ENCODE measurements at regions of chr1 and their contacts with region 1.

Region 1: GRCh38 chr1:26009796-26010460 is 11.6 kb upstream of the EXTL1 start:
- DNase-seq: peak; percentile 46 to 61
- H3K4me3 ChIP-seq: no peak overlapping the region
- H3K4me3 Mint-ChIP-seq: no peak overlapping the region
- H3K27ac Mint-ChIP-seq: no peak overlapping the region
- H3K4me1 ChIP-seq: no peaks in the 10 kb centered on the region
- H3K4me1 Mint-ChIP-seq: no peaks in the 10 kb centered on the region
- H3K27me3 ChIP-seq: no peaks in the 10 kb centered on the region
- H3K27me3 Mint-ChIP-seq: no peaks in the 10 kb centered on the region
- CTCF ChIP-seq: peak; percentile 47 to 48

Region 2: DNA sequence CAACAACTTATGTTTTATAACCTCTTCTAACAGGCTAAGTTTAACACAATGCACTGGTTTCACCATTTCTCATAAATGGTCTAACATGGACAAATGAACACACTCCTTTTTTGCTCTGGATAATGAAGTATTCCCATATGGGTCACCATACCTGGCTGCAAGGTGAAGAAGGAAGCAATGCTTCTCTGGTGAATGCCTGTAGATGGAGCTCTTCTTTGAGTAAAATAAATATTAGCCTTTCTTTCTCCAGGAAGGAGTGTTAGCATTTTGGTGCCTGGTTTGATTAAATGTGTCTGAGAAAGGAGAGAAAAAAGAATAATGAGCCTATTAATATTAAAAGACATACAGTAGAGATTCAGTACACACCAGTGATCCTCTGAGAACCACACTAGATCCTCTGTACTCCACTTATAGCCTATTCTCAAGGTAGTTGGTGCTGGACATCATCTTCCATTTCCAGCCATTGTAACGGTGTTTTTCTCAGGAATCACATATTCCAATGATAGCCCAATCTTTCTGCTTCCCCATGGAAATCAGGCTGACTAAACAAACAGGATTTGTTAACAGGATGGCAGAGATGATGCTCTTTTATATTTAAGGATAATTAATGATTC is 172.6 kb before region 1 on chr1:
- CTCF ChIA-PET with region 1: no interaction called
- POLR2A ChIA-PET with region 1: no interaction called
- intact Hi-C with region 1: loop called (anchors 1 kb)
- DNase-seq: peak in 1 of 2 experiments; percentile 15
- H3K4me3 ChIP-seq: no peak overlapping the region
- H3K4me3 Mint-ChIP-seq: no peak overlapping the region
- H3K27ac Mint-ChIP-seq: peak overlapping the region; percentile 50
- H3K4me1 ChIP-seq: no peaks in the 10 kb centered on the region
- H3K4me1 Mint-ChIP-seq: peaks cover 6% of the 10 kb centered on the region
- H3K27me3 ChIP-seq: no peaks in the 10 kb centered on the region
- H3K27me3 Mint-ChIP-seq: no peaks in the 10 kb centered on the region
- CTCF ChIP-seq: peak; percentile 24 to 60

Region 3: DNA sequence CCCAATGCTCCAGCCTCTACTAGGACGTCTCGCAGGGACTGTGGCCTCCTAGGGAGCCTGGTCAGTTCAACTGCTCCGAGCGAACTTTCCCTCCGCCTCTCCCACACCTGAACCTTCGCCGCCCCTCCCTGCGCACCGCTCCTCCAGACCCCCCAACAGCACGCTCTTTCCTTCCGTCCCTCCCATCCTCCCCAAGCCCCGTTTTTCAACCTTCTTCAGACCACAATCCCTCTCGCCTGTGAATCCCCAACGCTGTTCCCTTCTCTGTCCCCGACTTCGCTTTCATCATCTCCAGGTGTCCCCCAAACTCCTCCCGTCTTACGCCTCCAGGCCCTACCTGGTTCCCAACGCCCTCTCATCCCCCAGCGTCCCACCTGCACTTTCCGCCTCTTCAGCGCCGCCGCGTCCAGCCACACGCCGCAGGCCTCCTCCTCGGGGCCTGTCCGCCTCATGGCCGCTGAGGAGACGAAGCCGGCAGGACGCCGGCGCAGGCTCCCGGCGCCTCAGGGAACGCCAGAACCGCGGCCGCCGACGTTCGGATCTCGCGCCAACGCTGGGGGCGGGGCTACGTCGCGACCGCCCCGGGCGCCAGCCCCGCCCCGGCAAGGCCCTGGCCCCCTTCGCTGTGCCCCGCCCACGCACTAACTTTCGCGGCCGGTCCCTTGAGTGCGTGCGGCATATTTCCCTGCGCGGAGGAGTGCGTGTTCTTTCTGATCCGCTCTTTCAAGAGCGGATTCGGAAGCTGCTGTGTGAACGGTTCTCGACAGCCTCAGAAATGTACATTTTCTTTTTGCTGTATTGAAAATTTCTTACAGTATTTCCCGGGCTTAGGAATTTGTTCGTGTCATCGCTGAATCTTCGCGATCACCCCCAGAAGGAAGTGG is 150.8 kb before region 1 on chr1 and contains the start of gene AUNIP:
- CTCF ChIA-PET with region 1: no interaction called
- POLR2A ChIA-PET with region 1: no interaction called
- intact Hi-C with region 1: no loop called
- DNase-seq: peak; percentile 78 to 91
- H3K4me3 ChIP-seq: peak within 1 kb of the TSS; percentile 74
- H3K4me3 Mint-ChIP-seq: peak within 1 kb of the TSS; percentile 98
- H3K27ac Mint-ChIP-seq: peak within 1 kb of the TSS; percentile 96
- H3K4me1 ChIP-seq: peaks cover 6% of the 10 kb centered on the region; the same call in 1 of the 2 replicates
- H3K4me1 Mint-ChIP-seq: peaks cover 6% of the 10 kb centered on the region
- H3K27me3 ChIP-seq: no peaks in the 10 kb centered on the region
- H3K27me3 Mint-ChIP-seq: no peaks in the 10 kb centered on the region
- CTCF ChIP-seq: no peak
- total RNA-seq, gene AUNIP: 12.3 and 16.8 TPM in 2 replicates